Activated CD4-positive, alpha-beta memory T cell treated with anti-CD3 and anti-CD28 coated beads, Interleukin-2, amount 10 ng/mL, durations not matched to agents 7 days and 5 days (primary cell): ENCODE measurements at regions of chrX and their contacts with region 1.

Region 1: DNA sequence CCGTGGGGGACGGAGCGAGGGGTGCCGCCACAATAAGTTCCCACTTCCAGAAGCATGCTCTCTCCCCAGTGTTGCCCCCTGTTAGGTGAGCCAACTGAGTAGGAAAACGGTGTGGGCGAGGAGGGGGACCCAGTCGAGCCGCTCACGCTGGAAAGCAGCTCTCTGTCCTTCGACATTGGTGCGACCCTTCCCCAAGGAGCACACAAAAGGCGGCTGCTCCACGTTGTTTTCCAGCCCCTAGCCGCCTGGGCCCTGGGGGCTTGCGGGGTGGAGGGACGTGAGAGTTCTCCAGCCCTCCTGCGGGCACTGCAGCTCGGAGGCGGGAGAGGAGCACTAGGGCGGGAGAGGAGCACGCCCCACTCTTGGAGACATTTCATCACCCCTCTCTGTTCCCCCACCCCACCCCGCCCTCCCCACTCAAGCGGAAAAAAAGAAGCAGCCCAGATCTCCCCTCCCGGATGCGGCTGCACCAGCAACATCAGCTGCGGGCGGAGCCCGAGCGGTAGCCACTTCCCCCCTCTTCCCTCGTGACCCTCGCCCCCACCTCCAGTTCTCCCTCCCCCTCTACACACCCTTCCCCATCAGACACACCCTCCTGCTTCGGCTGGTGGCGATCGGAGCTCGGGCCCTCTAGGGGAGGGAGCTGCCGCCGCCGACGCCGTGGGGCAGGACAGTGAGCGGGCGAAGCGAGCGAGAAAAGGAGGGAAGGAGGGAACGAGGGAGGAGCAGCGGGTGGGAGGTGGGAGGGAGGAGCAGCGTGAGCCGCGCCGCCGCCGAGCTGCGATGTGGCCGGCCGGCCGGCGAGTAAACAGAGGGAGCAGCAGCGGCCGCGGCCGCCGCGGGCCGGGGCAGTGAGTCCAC is at the start of gene DOCK11:
- DNase-seq: peak; percentile 86
- H3K4me3 Mint-ChIP-seq: peak within 1 kb of the TSS; percentile 100
- H3K27ac Mint-ChIP-seq: peak within 1 kb of the TSS; percentile 100
- H3K4me1 Mint-ChIP-seq: peaks cover 30% of the 10 kb centered on the region
- H3K27me3 Mint-ChIP-seq: no peaks in the 10 kb centered on the region
- total RNA-seq, gene DOCK11: 79.0 to 82.9 TPM

Region 2: DNA sequence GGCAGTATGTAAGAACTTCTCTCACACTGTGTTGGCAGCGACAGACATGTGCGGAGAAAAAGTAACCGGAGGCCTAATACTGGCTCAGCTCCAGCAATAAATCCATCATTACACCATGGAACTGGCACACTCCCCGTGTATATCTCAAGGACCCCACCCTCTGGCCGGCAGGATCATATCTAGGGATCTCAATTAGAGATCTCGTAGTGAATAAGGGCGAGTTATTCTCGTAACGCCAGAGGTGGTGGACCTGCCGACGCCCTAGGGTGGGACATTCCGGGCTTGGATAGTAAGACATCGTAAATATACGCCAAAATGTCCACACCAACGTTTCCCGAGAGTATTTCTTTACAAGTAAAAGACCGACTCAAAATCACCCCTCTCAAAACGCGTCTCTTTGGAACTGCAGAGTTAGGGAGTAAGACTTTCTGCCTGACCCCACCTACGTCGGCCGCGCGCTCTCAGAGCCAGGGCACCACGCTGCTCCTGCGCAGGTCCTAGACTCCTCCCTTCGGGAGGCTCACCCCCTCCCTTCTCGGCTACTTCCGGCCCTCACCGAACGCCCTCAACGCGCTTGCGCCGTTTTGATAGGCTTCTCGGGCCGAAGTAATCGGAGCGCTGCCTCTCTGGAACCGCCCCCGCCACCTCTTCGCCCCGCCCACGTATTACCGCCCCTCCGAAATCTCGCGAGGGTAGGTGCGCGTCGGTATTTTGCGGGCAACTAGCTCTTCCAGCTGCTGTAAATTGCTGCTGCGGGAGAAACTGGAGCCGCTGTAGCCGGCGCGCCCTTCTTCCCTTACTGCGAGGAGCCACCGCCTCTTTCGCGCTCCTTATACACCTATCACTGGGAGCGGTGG is 149.7 kb before region 1 on chrX and contains the start of gene WDR44:
- CTCF ChIA-PET with region 1: no interaction called
- POLR2A ChIA-PET with region 1: interaction called, 23 read pairs
- DNase-seq: peak; percentile 94
- H3K4me3 Mint-ChIP-seq: peak within 1 kb of the TSS; percentile 97
- H3K27ac Mint-ChIP-seq: peak within 1 kb of the TSS; percentile 98
- H3K4me1 Mint-ChIP-seq: peaks cover 37% of the 10 kb centered on the region
- H3K27me3 Mint-ChIP-seq: no peaks in the 10 kb centered on the region
- total RNA-seq, gene WDR44: 18.9 to 19.9 TPM

Region 3: GRCh38 chrX:118520216-118521206 is 25.2 kb after region 1 on chrX:
- CTCF ChIA-PET with region 1: interaction called, 3 read pairs
- POLR2A ChIA-PET with region 1: interaction called, 69 read pairs
- DNase-seq: no peak
- H3K4me3 Mint-ChIP-seq: no peak overlapping the region
- H3K27ac Mint-ChIP-seq: no peak overlapping the region
- H3K4me1 Mint-ChIP-seq: peaks cover 67% of the 10 kb centered on the region
- H3K27me3 Mint-ChIP-seq: no peaks in the 10 kb centered on the region

Region 4: DNA sequence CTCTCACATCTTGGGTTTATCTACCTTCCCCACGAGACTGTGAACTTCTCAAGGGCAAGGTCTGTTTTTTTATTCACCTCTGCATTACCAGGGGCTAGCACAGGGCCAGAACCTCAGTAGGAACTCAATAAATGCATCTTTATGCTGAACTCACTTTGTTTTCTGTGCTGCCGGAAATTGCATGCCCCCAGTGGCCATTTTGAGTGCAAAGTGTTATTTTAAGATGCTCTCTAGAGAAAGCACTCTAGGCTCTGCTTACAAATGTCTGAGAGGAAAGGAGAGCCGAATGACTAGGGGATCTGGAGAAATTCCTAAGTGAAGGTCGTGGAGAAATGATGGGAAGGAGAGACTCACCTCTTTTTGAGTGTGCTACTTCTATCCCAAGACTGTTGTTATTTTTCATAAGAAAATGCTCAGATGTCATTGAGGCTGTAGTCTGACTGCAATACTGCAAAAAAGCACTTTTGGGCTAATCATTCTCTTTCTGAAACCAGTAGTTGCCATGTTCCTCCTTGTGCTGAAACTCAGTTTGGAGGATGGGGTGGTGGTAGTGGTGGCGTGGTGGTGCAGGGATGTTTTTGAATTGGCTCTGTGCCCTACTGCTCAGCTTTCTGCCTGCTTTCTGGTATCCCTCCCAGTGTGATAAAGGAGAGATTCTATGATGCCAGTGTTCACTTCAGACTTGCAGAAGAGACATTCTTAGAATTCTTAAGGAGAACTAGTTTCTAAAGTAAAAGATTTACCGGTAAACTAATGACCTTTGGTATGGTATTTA is 41.6 kb after region 1 on chrX:
- CTCF ChIA-PET with region 1: interaction called, 6 read pairs
- POLR2A ChIA-PET with region 1: interaction called, 389 read pairs
- DNase-seq: peak; percentile 60
- H3K4me3 Mint-ChIP-seq: peak overlapping the region; percentile 33
- H3K27ac Mint-ChIP-seq: peak overlapping the region; percentile 92
- H3K4me1 Mint-ChIP-seq: peaks cover 68% of the 10 kb centered on the region
- H3K27me3 Mint-ChIP-seq: no peaks in the 10 kb centered on the region

Region 5: DNA sequence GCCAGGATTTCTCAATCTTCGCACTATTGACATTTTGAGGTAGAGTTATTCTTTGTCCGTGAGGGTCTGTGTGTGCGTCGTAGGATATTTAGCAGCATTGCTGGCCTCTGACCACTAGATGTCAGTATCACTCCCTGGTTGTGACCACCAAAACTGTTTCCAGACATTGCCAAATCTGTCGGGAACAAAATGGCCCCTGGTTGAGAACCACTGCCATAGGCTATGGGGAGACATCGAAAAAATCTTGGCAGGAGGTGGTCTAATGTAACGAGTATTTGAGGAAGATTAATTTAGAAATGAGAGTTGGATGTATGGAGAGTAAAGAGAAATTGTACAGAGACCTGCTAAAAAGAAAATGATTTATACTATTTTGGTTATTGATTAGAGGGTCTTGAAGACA is 108.7 kb after region 1 on chrX:
- CTCF ChIA-PET with region 1: interaction called, 4 read pairs
- POLR2A ChIA-PET with region 1: interaction called, 10 read pairs
- DNase-seq: peak; percentile 16
- H3K4me3 Mint-ChIP-seq: no peak overlapping the region
- H3K27ac Mint-ChIP-seq: no peak overlapping the region
- H3K4me1 Mint-ChIP-seq: peaks cover 6% of the 10 kb centered on the region
- H3K27me3 Mint-ChIP-seq: no peaks in the 10 kb centered on the region